ENCODE measurements at regions of chr19 and their contacts with region 1.

Region 1: DNA sequence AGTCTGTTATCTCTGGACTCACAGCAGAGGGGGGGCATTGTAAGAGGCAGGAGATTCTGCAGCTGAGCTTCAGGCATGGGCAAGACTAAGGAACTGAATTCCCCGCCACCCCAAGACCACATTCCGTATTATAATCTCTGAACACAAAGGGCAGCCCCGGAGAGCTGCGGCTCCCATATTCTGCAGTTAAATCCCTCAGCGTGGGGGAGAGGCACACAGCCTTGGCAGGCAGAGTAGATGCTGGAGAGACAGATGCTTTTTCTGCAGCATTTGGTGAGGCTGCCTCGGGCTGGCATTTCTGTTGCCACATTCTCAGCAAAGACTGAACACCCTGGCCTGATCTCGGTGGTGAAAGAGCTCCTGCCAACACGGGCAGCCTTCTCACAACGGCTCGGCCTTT is 12.9 kb downstream of the CHAF1A start:
- DNase-seq: no peak
- H3K4me3 ChIP-seq: no peak overlapping the region
- H3K27me3 ChIP-seq: no peaks in the 10 kb centered on the region
- CTCF ChIP-seq: no peak

Region 2: DNA sequence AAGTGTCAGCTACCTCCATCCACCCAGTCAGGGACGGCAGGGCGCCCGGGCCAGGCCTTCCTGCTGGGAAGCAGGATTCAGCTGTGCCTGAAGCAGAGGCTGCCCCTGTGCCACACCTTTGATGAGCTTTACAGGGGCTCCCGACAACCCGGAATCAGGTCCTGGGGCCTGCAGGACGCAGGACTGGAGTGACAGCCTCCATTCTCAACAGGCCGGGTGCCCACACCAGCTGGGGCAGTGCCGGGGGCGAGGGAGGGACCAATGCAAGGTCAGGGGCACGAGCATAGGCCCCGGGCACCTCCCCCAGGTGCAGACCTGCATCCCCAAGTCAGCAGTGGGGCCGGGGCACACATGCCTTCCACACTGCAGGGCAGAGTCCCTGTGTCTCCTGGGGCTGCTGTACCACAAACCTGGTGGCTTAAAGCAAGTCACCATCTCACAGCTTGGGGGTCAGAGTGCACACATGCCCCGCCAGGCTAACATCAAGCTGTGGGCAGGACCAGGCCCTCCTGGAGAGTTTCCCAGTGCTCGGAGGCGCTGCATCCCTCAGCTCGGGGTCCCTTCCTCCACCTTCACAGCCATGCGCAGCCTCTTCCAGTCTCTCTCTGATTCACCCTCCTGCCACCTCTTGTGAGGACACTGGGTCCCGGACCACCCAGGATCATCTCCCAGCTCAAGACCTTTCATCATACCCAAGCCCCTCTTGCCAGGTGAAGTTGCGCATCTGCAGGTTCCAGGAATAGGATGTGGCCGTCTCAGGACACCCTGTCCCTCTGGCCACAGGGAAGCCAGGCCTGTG is 28.8 kb after region 1 on chr19:
- CTCF ChIA-PET with region 1: interaction called, 5 read pairs
- POLR2A ChIA-PET with region 1: interaction called, 12 read pairs
- DNase-seq: no peak
- H3K4me3 ChIP-seq: no peak overlapping the region
- H3K27me3 ChIP-seq: no peaks in the 10 kb centered on the region
- CTCF ChIP-seq: no peak

Measured in BJ (cell line).